ENCODE measurements at regions of chr13 and their contacts with region 1.

Region 1: GRCh38 chr13:111474136-111475002 is 153.9 kb downstream of the TEX29 start:
- DNase-seq: no peak
- H3K4me3 ChIP-seq: no peak overlapping the region
- H3K27ac ChIP-seq: no peak overlapping the region
- H3K4me1 ChIP-seq: no peaks in the 10 kb centered on the region
- H3K27me3 ChIP-seq: no peaks in the 10 kb centered on the region
- CTCF ChIP-seq: peak; percentile 20

Region 2: GRCh38 chr13:111880185-111880584 is 405.8 kb after region 1 on chr13:
- intact Hi-C with region 1: no loop called
- DNase-seq: no peak
- H3K4me3 ChIP-seq: no peak overlapping the region
- H3K27ac ChIP-seq: no peak overlapping the region
- H3K4me1 ChIP-seq: no peaks in the 10 kb centered on the region
- H3K27me3 ChIP-seq: no peaks in the 10 kb centered on the region
- CTCF ChIP-seq: no peak

Region 3: DNA sequence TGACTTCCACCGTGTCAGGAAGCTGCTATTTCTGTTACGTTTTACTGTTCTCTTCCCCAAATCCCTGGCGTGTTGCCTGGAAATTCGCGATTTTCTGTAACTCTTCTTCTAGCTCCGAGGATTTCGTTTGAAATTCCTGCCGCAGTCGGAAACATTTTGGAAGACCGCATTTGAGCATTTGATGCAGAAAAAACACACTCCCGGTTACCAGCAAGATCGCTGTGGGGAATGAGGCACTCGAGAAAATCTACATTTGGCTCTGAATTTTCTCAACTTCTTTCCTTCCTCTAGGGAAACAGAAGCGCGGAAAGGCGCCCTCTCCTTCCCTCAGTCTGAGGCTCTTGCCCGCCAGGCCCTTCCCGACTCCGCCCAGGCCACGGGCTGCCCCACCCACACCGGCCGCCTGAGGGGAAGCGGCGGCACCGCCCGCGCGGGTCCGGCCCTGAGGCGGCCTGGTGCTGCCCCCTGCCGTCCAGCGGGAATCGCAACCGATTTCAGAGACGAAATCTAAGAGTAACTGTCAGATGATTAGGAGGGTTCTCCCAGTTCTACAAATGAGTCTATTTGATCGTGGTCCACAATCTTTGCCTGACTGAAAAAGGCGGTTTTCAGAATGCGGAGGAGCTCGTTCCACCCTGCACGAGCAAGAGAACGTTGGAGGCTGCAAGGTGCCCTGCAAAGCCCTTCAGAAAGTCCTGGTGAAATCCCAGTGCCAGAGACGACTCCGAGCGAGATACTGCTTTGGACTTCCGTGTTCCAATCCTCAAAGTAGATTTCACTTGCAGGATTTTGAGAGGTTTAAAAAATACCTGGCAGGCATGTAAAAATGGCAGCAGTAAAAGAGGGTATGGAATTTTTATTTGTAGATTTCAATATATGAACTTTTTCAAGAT is 1132.0 kb after region 1 on chr13:
- intact Hi-C with region 1: loop called (anchors 5 kb)
- DNase-seq: peak; percentile 95
- H3K4me3 ChIP-seq: peak overlapping the region; percentile 32
- H3K27ac ChIP-seq: peak overlapping the region; percentile 39
- H3K4me1 ChIP-seq: no peaks in the 10 kb centered on the region
- H3K27me3 ChIP-seq: no peaks in the 10 kb centered on the region
- CTCF ChIP-seq: peak; percentile 87

Measured in colonic mucosa (tissue), 4 donors.